ENCODE measurements at regions of chr12 and their contacts with region 1.

Region 1: DNA sequence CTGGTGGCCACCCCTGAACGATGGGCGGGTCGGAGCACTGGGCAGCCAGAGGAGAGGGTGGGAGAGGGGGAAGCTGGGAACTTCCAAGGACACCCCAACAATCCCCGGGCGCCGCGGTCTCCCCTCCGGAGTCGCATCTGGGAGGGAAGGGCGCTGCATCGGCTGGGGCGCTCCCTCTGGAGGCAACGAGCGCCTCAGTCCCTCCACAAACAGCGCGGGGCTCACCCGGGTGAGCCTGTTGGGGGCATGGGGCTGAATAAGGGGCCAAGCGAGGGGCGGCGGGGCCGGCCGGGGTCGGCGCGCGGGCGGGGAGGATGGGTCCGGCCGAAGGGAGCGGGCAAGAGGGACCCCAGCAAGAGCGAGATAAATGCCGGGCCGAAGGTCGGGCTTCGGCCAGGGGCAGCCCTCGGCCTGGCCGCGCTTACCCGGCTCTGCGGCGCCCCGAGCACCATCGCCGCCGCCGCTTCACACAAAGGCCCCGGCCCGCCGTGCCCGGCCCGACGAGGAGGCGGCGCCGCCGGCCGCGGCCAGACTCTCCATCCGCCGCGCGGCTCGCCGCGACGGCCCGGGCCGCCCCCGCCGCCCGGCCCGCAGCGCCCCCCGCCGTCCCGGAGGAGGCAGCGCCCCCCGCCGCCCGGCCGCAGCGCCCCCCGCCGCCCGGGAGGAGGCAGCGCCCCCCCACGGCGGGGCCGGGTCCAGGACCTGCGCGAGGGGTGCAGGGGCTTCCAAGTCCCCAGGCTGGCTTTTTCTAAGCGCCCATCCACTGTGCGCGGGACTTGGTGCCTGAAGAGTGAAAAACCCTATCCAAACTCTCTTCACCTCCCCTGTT is at the start of gene ZBTB39:
- DNase-seq: peak; percentile 70
- ATAC-seq: peak; percentile 82
- H3K4me3 Mint-ChIP-seq: peak within 1 kb of the TSS; percentile 81
- H3K27ac Mint-ChIP-seq: peak within 1 kb of the TSS; percentile 82
- H3K4me1 Mint-ChIP-seq: peaks cover 34% of the 10 kb centered on the region
- H3K27me3 Mint-ChIP-seq: no peaks in the 10 kb centered on the region
- total RNA-seq, gene ZBTB39: 8.8 to 9.3 TPM

Region 2: GRCh38 chr12:56839915-56840325 is 166.3 kb before region 1 on chr12:
- CTCF ChIA-PET with region 1: interaction called, 18 read pairs
- DNase-seq: peak; percentile 65
- ATAC-seq: peak; percentile 53
- H3K4me3 Mint-ChIP-seq: no peak overlapping the region
- H3K27ac Mint-ChIP-seq: no peak overlapping the region
- H3K4me1 Mint-ChIP-seq: peaks cover 13% of the 10 kb centered on the region
- H3K27me3 Mint-ChIP-seq: peaks cover 4% of the 10 kb centered on the region

Region 3: GRCh38 chr12:56993346-56993745 is 12.8 kb before region 1 on chr12:
- CTCF ChIA-PET with region 1: interaction called, 55 read pairs
- DNase-seq: peak; percentile 38
- ATAC-seq: no peak
- H3K4me3 Mint-ChIP-seq: no peak overlapping the region
- H3K27ac Mint-ChIP-seq: no peak overlapping the region
- H3K4me1 Mint-ChIP-seq: peaks cover 20% of the 10 kb centered on the region
- H3K27me3 Mint-ChIP-seq: peaks cover 6% of the 10 kb centered on the region

Region 4: DNA sequence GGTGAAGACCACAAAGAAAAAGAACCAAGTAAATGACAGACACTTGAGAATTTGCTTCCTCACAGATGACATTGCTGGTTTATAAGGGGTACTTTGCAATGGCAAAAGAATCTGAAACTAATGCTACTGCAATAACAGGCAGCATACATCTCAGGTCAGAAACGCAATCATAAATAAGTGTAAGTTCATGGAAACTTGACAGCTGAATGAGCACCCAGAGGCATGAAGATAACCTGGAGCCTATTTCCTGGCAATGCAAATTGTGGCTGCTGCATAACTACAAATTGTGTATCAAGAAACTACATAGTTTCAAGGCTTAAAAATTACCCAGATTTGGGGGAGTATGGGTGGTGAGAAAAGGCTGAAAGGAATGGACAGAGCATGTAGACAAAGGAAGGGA is 52.3 kb after region 1 on chr12:
- CTCF ChIA-PET with region 1: interaction called, 88 read pairs
- DNase-seq: no peak
- ATAC-seq: no peak
- H3K4me3 Mint-ChIP-seq: no peak overlapping the region
- H3K27ac Mint-ChIP-seq: no peak overlapping the region
- H3K4me1 Mint-ChIP-seq: peaks cover 10% of the 10 kb centered on the region
- H3K27me3 Mint-ChIP-seq: no peaks in the 10 kb centered on the region

Region 5: DNA sequence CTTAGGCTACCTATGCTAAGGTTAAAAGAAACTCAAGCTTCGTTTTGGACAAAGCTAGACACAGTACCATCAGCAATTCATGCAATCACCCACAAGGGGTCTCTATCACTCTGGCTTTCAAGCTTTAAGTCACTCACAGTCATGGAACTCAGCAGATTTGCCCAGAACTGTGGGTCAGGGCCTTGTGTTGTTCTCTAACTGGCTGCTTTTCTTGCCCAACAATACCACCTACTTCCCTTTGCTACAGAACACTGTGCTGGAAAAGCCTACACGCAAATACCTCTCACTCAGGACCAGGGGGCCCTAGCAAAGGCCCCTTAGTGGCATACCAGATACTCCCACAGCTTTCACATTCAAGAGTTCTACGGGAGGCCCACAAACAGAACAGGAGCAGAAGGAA is 63.3 kb after region 1 on chr12:
- CTCF ChIA-PET with region 1: interaction called, 88 read pairs
- DNase-seq: peak; percentile 73
- ATAC-seq: peak; percentile 97
- H3K4me3 Mint-ChIP-seq: no peak overlapping the region
- H3K27ac Mint-ChIP-seq: peak overlapping the region; percentile 74
- H3K4me1 Mint-ChIP-seq: peaks cover 48% of the 10 kb centered on the region
- H3K27me3 Mint-ChIP-seq: no peaks in the 10 kb centered on the region

Measured in activated CD8-positive, alpha-beta memory T cell treated with anti-CD3 and anti-CD28 coated beads, Interleukin-2, amount 10 ng/mL, durations not matched to agents 7 days and 5 days (primary cell).